Common myeloid progenitor, CD34-positive (primary cell): ENCODE measurements at regions of chr3 and their contacts with region 1.

Region 1: GRCh38 chr3:85312331-85312730 is 353.5 kb downstream of the CADM2 start:
- DNase-seq: no peak
- H3K4me3 ChIP-seq: no peak overlapping the region
- H3K27ac ChIP-seq: no peak overlapping the region
- H3K4me1 ChIP-seq: no peaks in the 10 kb centered on the region
- H3K27me3 ChIP-seq: no peaks in the 10 kb centered on the region

Region 2: DNA sequence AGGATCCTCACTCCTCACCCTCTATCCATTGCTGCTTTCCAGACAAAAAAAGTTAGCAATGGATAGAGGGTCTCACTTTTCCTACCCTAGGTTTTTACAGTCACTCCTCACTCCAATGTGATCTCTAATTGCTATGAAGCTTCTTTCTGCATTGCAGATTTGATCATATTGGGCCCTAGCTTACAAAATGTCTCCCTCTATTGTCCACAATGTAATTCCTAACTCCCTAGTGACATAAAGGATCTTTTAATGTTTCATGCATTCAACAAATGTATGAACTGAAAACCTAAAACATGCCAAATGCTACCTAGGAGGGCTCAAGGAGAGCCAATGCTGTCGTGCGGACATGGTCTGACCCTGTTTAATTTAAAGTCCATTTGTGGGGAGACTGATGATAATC is 118.8 kb before region 1 on chr3:
- CTCF ChIA-PET with region 1: no interaction called
- POLR2A ChIA-PET with region 1: interaction called, 11 read pairs
- DNase-seq: no peak
- H3K4me3 ChIP-seq: no peak overlapping the region
- H3K27ac ChIP-seq: no peak overlapping the region
- H3K4me1 ChIP-seq: no peaks in the 10 kb centered on the region
- H3K27me3 ChIP-seq: no peaks in the 10 kb centered on the region